Naive thymus-derived CD4-positive, alpha-beta T cell (primary cell): ENCODE measurements at regions of chr1 and their contacts with region 1.

Region 1: DNA sequence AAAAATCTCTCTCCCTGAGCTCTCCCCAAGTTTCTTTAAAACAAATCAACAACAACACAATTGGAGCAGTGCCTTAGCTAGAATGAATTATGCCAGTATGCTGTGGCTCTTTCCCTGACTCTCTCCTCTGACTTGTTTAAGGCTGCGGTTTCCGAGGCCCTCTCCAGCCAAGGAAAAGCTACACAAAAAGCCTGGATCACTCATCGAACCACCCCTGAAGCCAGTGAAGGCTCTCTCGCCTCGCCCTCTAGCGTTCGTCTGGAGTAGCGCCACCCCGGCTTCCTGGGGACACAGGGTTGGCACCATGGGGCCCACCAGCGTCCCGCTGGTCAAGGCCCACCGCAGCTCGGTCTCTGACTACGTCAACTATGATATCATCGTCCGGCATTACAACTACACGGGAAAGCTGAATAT is 1.9 kb downstream of the S1PR1 start:
- DNase-seq: peak; percentile 74 to 88 (median 83)
- ATAC-seq: peak; percentile 67
- H3K4me3 ChIP-seq: peak overlapping the region; percentile 88
- H3K4me3 Mint-ChIP-seq: peak overlapping the region; percentile 90 to 100 (median 98)
- H3K27ac ChIP-seq: peak overlapping the region; percentile 94
- H3K27ac Mint-ChIP-seq: peak overlapping the region; percentile 93 to 100 (median 99)
- H3K4me1 ChIP-seq: peaks cover 37 to 42% of the 10 kb centered on the region in 2 donors
- H3K4me1 Mint-ChIP-seq: peaks cover 43 to 68% (median 56%) of the 10 kb centered on the region in 7 donors
- H3K27me3 ChIP-seq: no peaks in the 10 kb centered on the region
- H3K27me3 Mint-ChIP-seq: peaks cover 0 to 4% (median 0%) of the 10 kb centered on the region in 5 donors

Region 2: GRCh38 chr1:100037927-100038659 is 1200.6 kb before region 1 on chr1:
- CTCF ChIA-PET with region 1: no interaction called
- POLR2A ChIA-PET with region 1: no interaction called
- intact Hi-C with region 1: loop called in 1 of 2 experiments (anchors 5 kb)
- DNase-seq: peak; percentile 83 to 92 (median 88)
- ATAC-seq: peak; percentile 91
- H3K4me3 ChIP-seq: peak overlapping the region; percentile 70
- H3K4me3 Mint-ChIP-seq: peak overlapping the region; percentile 93 to 99 (median 97)
- H3K27ac ChIP-seq: peak overlapping the region; percentile 99
- H3K27ac Mint-ChIP-seq: peak overlapping the region; percentile 97 to 100 (median 99)
- H3K4me1 ChIP-seq: peaks cover 22 to 31% of the 10 kb centered on the region in 2 donors
- H3K4me1 Mint-ChIP-seq: peaks cover 29 to 68% (median 58%) of the 10 kb centered on the region in 7 donors
- H3K27me3 ChIP-seq: no peaks in the 10 kb centered on the region
- H3K27me3 Mint-ChIP-seq: no peaks in the 10 kb centered on the region

Region 3: DNA sequence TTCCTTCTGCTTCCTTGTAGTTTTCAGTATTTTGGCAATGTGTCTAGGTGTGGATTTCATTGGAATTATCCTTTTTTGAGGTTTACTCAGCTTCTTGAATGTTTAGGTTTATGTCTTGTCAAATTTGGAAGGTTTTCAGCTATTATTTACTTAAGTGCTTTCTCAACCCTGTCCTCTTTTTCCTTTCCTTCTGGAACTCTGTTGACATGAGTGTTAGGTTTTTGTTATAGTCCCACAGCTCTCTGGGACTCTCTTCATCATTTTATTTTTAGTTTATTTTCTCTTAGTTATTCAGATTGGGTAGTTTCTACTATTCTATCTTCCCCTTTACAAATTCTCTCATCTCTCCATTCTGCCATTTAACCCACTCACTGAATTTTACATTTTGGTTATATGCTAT is 763.9 kb before region 1 on chr1:
- CTCF ChIA-PET with region 1: no interaction called
- POLR2A ChIA-PET with region 1: no interaction called
- intact Hi-C with region 1: no loop called
- DNase-seq: no peak
- ATAC-seq: no peak
- H3K4me3 ChIP-seq: no peak overlapping the region
- H3K4me3 Mint-ChIP-seq: peak overlapping the region in 1 of 10 donors; percentile 8
- H3K27ac ChIP-seq: no peak overlapping the region
- H3K27ac Mint-ChIP-seq: peak overlapping the region in 7 of 9 donors; percentile 1 to 71 (median 29)
- H3K4me1 ChIP-seq: no peaks in the 10 kb centered on the region
- H3K4me1 Mint-ChIP-seq: peaks cover 3 to 60% (median 37%) of the 10 kb centered on the region in 7 donors
- H3K27me3 ChIP-seq: no peaks in the 10 kb centered on the region
- H3K27me3 Mint-ChIP-seq: no peaks in the 10 kb centered on the region

Region 4: GRCh38 chr1:100928128-100928527 is 310.6 kb before region 1 on chr1:
- CTCF ChIA-PET with region 1: interaction called, 15 read pairs
- POLR2A ChIA-PET with region 1: interaction called, 231 read pairs
- intact Hi-C with region 1: loop called (anchors 1 kb)
- DNase-seq: peak in 1 of 9 donors; percentile 9
- ATAC-seq: peak; percentile 30
- H3K4me3 ChIP-seq: peak overlapping the region; percentile 15
- H3K4me3 Mint-ChIP-seq: no peak overlapping the region
- H3K27ac ChIP-seq: peak overlapping the region; percentile 74
- H3K27ac Mint-ChIP-seq: no peak overlapping the region
- H3K4me1 ChIP-seq: peaks cover 76 to 84% of the 10 kb centered on the region in 2 donors
- H3K4me1 Mint-ChIP-seq: peaks cover 26 to 61% (median 39%) of the 10 kb centered on the region in 7 donors
- H3K27me3 ChIP-seq: no peaks in the 10 kb centered on the region
- H3K27me3 Mint-ChIP-seq: no peaks in the 10 kb centered on the region

Region 5: DNA sequence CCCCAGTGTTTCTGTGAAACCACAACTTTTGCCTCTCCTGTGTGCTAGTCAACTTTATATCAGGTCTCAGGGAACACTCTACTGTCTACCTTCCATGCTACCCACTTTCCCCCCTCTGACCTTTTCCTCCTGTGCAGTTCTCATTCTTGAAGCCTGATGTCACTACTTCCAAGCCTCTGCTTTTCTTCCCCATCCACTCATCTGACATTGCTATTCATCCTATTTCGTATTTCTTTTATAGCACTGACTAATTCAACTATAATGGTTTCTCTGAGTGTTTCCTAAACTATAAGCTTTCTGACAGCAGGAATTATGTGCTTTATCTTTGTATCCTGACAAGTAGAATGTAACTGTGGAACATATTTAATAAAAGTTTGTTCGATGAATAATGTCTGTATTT is 194.9 kb before region 1 on chr1:
- CTCF ChIA-PET with region 1: interaction called, 7 read pairs
- POLR2A ChIA-PET with region 1: interaction called, 7 read pairs
- intact Hi-C with region 1: loop called in 1 of 2 experiments (anchors 5 kb)
- DNase-seq: no peak
- ATAC-seq: no peak
- H3K4me3 ChIP-seq: no peak overlapping the region
- H3K4me3 Mint-ChIP-seq: no peak overlapping the region
- H3K27ac ChIP-seq: no peak overlapping the region
- H3K27ac Mint-ChIP-seq: no peak overlapping the region
- H3K4me1 ChIP-seq: no peaks in the 10 kb centered on the region
- H3K4me1 Mint-ChIP-seq: peaks cover 2 to 15% (median 13%) of the 10 kb centered on the region in 7 donors
- H3K27me3 ChIP-seq: no peaks in the 10 kb centered on the region
- H3K27me3 Mint-ChIP-seq: no peaks in the 10 kb centered on the region

Region 6: GRCh38 chr1:101128211-101128727 is 110.4 kb before region 1 on chr1:
- CTCF ChIA-PET with region 1: interaction called, 9 read pairs
- POLR2A ChIA-PET with region 1: interaction called, 136 read pairs
- intact Hi-C with region 1: loop called in 1 of 2 experiments (anchors 2 kb)
- DNase-seq: peak in 7 of 9 donors; percentile 38 to 72 (median 60)
- ATAC-seq: peak; percentile 79
- H3K4me3 ChIP-seq: no peak overlapping the region
- H3K4me3 Mint-ChIP-seq: peak overlapping the region; percentile 17 to 80 (median 72)
- H3K27ac ChIP-seq: peak overlapping the region; percentile 64
- H3K27ac Mint-ChIP-seq: peak overlapping the region; percentile 85 to 96 (median 91)
- H3K4me1 ChIP-seq: peaks cover 26 to 49% of the 10 kb centered on the region in 2 donors
- H3K4me1 Mint-ChIP-seq: peaks cover 42 to 83% (median 66%) of the 10 kb centered on the region in 7 donors
- H3K27me3 ChIP-seq: no peaks in the 10 kb centered on the region
- H3K27me3 Mint-ChIP-seq: no peaks in the 10 kb centered on the region

Region 7: DNA sequence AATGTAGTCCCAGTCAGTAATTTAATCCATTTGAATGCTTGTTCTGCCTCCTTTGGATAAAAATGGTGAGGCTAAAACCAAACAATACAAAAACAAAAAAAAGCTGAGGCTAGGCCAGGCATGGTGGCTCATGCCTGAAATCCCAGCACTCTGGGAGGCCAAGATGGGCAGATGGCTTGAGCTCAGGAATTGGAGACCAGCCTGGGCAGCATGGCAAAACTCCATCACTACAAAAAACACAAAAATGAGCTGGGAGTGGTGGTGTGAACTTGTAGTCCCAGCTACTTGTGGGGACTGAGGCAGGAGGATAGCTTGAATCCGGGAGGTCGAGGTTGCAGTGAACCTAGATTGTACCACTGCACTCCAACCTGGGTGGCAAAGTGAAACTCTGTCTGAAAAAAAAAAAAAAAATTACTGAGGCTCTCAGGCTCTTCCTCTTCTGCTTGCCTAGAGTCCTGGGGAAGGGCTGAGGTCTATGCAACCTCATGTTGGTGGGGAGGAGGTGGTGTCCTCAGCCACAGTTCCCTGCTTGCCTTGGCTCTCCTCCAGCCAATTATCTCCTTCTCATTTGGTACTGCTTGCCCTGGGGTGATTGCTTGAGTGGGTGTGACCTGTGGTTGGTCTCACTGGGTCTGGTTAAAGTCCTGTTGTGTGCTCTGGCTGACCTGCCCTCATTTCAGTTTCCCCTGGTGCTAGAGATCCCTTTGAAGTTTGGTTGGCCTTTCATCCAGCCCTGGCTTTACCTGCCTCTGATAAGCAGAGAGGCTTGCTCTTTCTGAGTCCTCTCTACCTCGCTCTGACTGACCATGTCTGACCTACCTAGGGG is 19.0 kb after region 1 on chr1:
- CTCF ChIA-PET with region 1: interaction called, 14 read pairs
- POLR2A ChIA-PET with region 1: interaction called, 101 read pairs
- intact Hi-C with region 1: loop called (anchors 1 to 2 kb)
- DNase-seq: peak in 2 of 9 donors; percentile 7 to 42
- ATAC-seq: peak; percentile 87
- H3K4me3 ChIP-seq: no peak overlapping the region
- H3K4me3 Mint-ChIP-seq: peak overlapping the region in 9 of 10 donors; percentile 34 to 77 (median 60)
- H3K27ac ChIP-seq: peak overlapping the region; percentile 53
- H3K27ac Mint-ChIP-seq: peak overlapping the region; percentile 26 to 92 (median 83)
- H3K4me1 ChIP-seq: peaks cover 49 to 54% of the 10 kb centered on the region in 2 donors
- H3K4me1 Mint-ChIP-seq: peaks cover 43 to 76% (median 67%) of the 10 kb centered on the region in 7 donors
- H3K27me3 ChIP-seq: no peaks in the 10 kb centered on the region
- H3K27me3 Mint-ChIP-seq: no peaks in the 10 kb centered on the region

Region 8: GRCh38 chr1:101309334-101310311 is 70.9 kb after region 1 on chr1:
- CTCF ChIA-PET with region 1: interaction called, 5 read pairs
- POLR2A ChIA-PET with region 1: interaction called, 40 read pairs
- intact Hi-C with region 1: loop called (anchors 1 kb)
- DNase-seq: peak; percentile 53 to 95 (median 91)
- ATAC-seq: peak; percentile 86
- H3K4me3 ChIP-seq: peak overlapping the region; percentile 42
- H3K4me3 Mint-ChIP-seq: peak overlapping the region; percentile 74 to 89 (median 85)
- H3K27ac ChIP-seq: peak overlapping the region; percentile 92
- H3K27ac Mint-ChIP-seq: peak overlapping the region; percentile 93 to 99 (median 98)
- H3K4me1 ChIP-seq: peaks cover 46 to 53% of the 10 kb centered on the region in 2 donors
- H3K4me1 Mint-ChIP-seq: peaks cover 43 to 79% (median 66%) of the 10 kb centered on the region in 7 donors
- H3K27me3 ChIP-seq: no peaks in the 10 kb centered on the region
- H3K27me3 Mint-ChIP-seq: peaks cover 0 to 22% (median 0%) of the 10 kb centered on the region in 5 donors

Region 9: DNA sequence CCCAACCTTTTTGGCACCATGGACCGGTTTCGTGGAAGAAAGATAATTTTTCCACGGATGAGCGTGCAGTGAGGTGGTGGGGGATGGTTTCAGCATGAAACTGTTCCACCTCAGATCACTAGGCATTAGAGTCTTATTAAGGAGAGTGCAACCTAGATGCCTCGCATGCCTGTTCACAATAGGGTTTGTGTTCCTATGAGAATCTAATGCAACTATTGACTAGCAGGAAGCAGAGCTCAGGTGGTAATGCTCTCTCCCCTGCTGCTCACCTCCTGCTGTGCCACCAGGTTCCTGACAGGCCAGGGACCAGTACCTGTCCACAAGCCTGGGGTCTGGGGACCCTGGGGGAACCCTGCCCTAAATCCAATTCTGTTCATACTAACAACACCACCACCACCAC is 380.2 kb after region 1 on chr1:
- CTCF ChIA-PET with region 1: no interaction called
- POLR2A ChIA-PET with region 1: no interaction called
- intact Hi-C with region 1: no loop called
- DNase-seq: no peak
- ATAC-seq: no peak
- H3K4me3 ChIP-seq: no peak overlapping the region
- H3K4me3 Mint-ChIP-seq: no peak overlapping the region
- H3K27ac ChIP-seq: no peak overlapping the region
- H3K27ac Mint-ChIP-seq: no peak overlapping the region
- H3K4me1 ChIP-seq: no peaks in the 10 kb centered on the region
- H3K4me1 Mint-ChIP-seq: no peaks in the 10 kb centered on the region
- H3K27me3 ChIP-seq: no peaks in the 10 kb centered on the region
- H3K27me3 Mint-ChIP-seq: peaks cover 0 to 19% (median 11%) of the 10 kb centered on the region in 5 donors